GM10248 (cell line): ENCODE measurements at regions of chr4 and their contacts with region 1.

Region 1: DNA sequence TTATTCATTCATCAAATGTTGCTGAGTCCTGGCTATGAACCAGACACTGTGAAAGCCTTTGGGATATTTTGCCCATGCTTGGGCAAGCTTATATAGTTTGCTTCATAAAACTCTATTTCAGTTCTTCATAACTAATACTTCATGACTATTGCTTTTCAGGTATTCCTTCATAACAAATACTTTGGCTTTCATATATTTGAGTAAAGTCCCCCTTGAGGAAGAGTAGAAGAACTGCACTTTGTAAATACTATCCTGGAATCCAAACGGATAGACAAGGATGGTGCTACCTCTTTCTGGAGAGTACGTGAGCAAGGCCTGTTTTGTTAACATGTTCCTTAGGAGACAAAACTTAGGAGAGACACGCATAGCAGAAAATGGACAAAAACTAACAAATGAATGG is 1.7 kb upstream of the AFP start:
- DNase-seq: peak; percentile 8
- CTCF ChIP-seq: peak; percentile 34

Region 2: GRCh38 chr4:73417973-73418372 is 16.3 kb before region 1 on chr4:
- CTCF ChIA-PET with region 1: interaction called, 15 read pairs
- POLR2A ChIA-PET with region 1: no interaction called
- DNase-seq: no peak
- CTCF ChIP-seq: no peak

Region 3: DNA sequence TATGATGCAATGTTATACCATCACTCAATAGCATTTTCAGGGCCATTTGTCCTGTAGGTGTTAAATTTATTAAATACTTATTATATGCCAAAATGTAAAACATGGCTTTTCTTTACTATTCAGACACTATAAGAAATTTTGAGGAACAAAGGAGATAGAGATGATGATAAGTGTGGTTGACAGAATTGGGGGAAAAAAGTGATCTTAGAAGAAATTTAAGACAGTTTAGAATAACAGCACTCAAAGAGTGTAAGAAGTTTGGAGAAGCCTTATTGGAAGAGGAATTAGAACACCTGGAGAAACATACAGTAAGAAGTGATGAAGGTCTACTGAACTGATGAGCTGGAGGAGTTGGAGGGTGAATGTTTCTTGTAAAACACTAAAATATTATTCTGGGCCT is 11.1 kb before region 1 on chr4:
- CTCF ChIA-PET with region 1: interaction called, 15 read pairs
- POLR2A ChIA-PET with region 1: no interaction called
- DNase-seq: no peak
- CTCF ChIP-seq: no peak

Region 4: GRCh38 chr4:73533515-73534422 is 99.5 kb after region 1 on chr4:
- CTCF ChIA-PET with region 1: no interaction called
- POLR2A ChIA-PET with region 1: no interaction called
- DNase-seq: no peak
- CTCF ChIP-seq: no peak